PC-9 (cell line): ENCODE measurements at regions of chr5 and their contacts with region 1.

Region 1: DNA sequence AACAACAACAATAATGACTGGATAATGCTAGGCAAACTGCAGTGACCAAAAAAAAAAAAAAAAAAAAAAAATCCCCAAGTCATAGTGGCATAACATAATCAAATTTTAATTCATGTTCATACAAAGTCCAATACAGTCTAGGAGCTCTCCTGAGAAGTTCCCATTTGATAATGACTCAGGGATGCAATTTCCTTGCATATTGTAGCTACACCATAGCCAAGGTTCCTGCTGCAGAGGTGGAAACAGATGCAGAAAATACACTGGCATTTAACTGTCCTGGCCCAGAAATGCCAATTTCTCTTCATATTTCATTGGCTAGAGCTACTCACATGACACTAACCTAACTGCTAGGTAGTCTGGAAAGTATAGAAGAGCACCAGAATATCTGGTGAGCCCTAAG is 72.2 kb upstream of the SLC12A2 start:
- DNase-seq: no peak
- H3K4me3 ChIP-seq: no peak overlapping the region
- H3K27ac ChIP-seq: no peak overlapping the region
- H3K4me1 ChIP-seq: peaks cover 7% of the 10 kb centered on the region; the same call in 1 of the 2 replicates
- H3K27me3 ChIP-seq: no peaks in the 10 kb centered on the region
- CTCF ChIP-seq: no peak

Region 2: GRCh38 chr5:128053291-128053954 is 42.1 kb after region 1 on chr5:
- CTCF ChIA-PET with region 1: no interaction called
- POLR2A ChIA-PET with region 1: interaction called, 43 read pairs
- intact Hi-C with region 1: no loop called
- DNase-seq: peak in 1 of 2 experiments; percentile 36
- H3K4me3 ChIP-seq: no peak overlapping the region
- H3K27ac ChIP-seq: no peak overlapping the region
- H3K4me1 ChIP-seq: no peaks in the 10 kb centered on the region
- H3K27me3 ChIP-seq: no peaks in the 10 kb centered on the region
- CTCF ChIP-seq: no peak